Activated B cell treated with CpG ODN at 0.5 μM for 24 hours (primary cell): ENCODE measurements at regions of chr20 and their contacts with region 1.

Region 1: GRCh38 chr20:47468290-47469050 is 33.2 kb upstream of the NCOA3 start:
- DNase-seq: peak; percentile 35
- ATAC-seq: peak; percentile 80
- H3K4me3 Mint-ChIP-seq: peak overlapping the region; percentile 50
- H3K27ac Mint-ChIP-seq: peak overlapping the region; percentile 94
- H3K4me1 Mint-ChIP-seq: peaks cover 64% of the 10 kb centered on the region
- H3K27me3 Mint-ChIP-seq: no peaks in the 10 kb centered on the region
- CTCF ChIP-seq: no peak

Region 2: DNA sequence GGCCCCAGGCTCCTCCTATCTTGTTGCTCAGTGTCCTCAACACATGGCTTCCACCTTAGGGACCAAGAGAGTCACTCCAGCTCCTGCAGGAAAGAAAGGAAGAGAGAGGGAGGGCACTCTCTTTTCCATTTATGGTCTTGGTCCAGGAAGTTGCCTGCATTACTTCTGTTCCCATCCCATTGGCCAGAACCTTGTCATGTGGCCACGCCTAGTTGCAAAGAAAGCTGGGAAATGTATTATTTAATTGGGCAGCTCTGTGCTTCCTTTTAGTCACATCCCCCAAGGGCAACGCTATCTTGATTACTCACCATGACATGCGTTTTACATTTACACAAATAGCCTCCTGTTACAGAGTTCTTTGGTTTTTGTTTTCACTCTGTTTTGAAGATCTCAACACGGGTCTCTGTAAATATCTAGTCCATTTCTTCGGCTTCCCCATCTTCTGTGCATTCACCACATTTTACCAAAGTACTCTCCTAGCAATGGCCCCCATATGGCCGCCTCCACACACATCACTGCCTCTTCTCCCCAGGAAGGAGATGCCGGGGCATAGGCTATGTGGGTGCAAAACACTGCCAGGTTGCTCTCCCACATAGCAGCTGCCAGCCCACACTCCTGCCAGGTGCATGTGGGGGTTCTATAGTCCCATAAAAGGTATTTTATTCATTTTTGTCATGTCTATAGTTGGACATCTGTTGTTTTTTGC is 76.3 kb before region 1 on chr20:
- CTCF ChIA-PET with region 1: interaction called, 4 read pairs
- POLR2A ChIA-PET with region 1: interaction called, 7 read pairs
- intact Hi-C with region 1: loop called (anchors 1 kb)
- DNase-seq: no peak
- ATAC-seq: peak; percentile 74
- H3K4me3 Mint-ChIP-seq: peak overlapping the region; percentile 55
- H3K27ac Mint-ChIP-seq: peak overlapping the region; percentile 95
- H3K4me1 Mint-ChIP-seq: peaks cover 47% of the 10 kb centered on the region
- H3K27me3 Mint-ChIP-seq: no peaks in the 10 kb centered on the region
- CTCF ChIP-seq: no peak

Region 3: DNA sequence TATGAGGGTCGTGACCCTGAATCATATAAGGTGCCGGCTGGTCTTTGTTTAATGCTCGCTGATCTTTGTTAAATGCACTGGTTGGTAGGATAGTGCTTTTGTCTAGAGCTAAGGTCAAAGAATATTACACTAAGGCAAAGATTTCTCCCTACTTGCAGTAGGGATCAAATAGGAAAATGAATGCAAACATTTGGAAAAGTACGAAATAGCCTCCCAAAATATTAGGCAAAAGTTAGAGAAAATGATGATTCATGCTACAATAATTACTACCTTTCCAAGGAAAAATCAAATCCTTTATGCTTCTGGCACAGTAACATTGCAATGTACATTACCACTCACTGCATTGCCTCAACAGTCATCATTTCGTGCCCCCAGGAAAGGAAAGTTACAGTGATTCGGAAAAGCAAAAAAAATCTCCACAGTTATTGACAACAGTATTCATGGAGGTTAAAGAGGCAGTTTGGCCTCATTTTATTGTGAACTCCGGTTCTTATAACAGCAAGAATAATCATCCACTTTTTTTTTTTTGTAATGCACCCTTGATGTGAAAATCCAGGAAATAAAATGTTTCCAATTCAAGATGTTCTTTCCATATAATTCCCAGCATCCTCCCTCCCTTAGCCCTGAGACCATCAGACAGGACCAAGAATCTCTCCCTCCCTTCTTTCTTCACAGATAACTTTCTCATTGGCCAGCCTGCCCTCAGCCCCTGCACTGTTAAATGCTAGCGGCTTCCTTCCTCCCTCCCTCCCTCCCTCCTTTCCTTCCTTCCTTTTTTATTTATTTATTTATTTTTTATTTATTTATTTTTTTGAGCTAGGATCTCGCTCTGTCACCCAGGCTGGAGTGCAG is 50.2 kb before region 1 on chr20:
- CTCF ChIA-PET with region 1: interaction called, 6 read pairs
- POLR2A ChIA-PET with region 1: interaction called, 142 read pairs
- intact Hi-C with region 1: loop called (anchors 1 kb)
- DNase-seq: no peak
- ATAC-seq: no peak
- H3K4me3 Mint-ChIP-seq: no peak overlapping the region
- H3K27ac Mint-ChIP-seq: peak overlapping the region; percentile 100
- H3K4me1 Mint-ChIP-seq: peaks cover 73% of the 10 kb centered on the region
- H3K27me3 Mint-ChIP-seq: no peaks in the 10 kb centered on the region
- CTCF ChIP-seq: no peak

Region 4: GRCh38 chr20:47453142-47453782 is 15.2 kb before region 1 on chr20:
- CTCF ChIA-PET with region 1: no interaction called
- POLR2A ChIA-PET with region 1: interaction called, 21 read pairs
- intact Hi-C with region 1: loop called (anchors 2 kb)
- DNase-seq: no peak
- ATAC-seq: peak; percentile 78
- H3K4me3 Mint-ChIP-seq: peak overlapping the region; percentile 49
- H3K27ac Mint-ChIP-seq: peak overlapping the region; percentile 80
- H3K4me1 Mint-ChIP-seq: peaks cover 55% of the 10 kb centered on the region
- H3K27me3 Mint-ChIP-seq: no peaks in the 10 kb centered on the region
- CTCF ChIP-seq: no peak

Region 5: GRCh38 chr20:47487175-47487917 is 18.9 kb after region 1 on chr20:
- CTCF ChIA-PET with region 1: interaction called, 6 read pairs
- POLR2A ChIA-PET with region 1: interaction called, 99 read pairs
- intact Hi-C with region 1: loop called (anchors 1 kb)
- DNase-seq: peak; percentile 42
- ATAC-seq: peak; percentile 77
- H3K4me3 Mint-ChIP-seq: peak overlapping the region; percentile 72
- H3K27ac Mint-ChIP-seq: peak overlapping the region; percentile 97
- H3K4me1 Mint-ChIP-seq: peaks cover 79% of the 10 kb centered on the region
- H3K27me3 Mint-ChIP-seq: no peaks in the 10 kb centered on the region
- CTCF ChIP-seq: no peak

Region 6: DNA sequence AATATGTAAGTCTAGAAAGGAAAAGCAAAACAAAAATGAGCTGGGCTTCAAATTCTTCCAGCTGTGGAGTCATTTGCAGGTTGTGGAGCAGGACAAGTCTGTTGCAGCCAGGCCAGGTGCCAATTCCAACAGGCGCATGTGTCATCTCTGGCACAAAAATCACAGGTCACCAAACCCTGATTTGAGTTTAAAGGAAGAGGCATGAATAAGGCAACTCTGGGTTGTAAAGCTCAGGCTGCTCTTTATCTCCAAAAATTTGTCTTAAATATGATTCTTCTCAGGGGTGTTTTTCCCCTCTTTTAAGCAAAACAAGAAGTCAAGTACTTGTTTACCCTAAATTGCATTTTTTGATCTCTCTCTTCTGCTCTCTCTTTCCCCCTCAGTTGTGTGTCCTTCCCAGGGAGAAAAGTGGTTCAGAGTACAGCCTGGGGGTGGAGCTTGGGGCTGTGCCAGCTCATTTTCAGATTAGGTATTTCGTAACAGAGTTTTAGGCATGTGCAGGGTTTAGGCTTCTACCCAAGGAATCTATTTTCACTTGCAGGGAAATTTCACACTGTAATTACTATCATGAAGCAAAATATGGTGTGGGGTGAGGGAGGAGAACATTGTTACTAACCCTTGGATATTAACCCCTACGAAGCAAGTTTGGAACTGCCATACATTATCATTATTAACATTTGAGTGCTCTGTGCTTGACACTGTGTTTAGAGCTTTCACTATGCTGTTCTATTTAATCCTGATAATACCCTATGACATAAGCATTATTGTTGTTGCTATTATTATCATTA is 24.9 kb after region 1 on chr20:
- CTCF ChIA-PET with region 1: interaction called, 6 read pairs
- POLR2A ChIA-PET with region 1: interaction called, 99 read pairs
- intact Hi-C with region 1: no loop called
- DNase-seq: no peak
- ATAC-seq: peak; percentile 60
- H3K4me3 Mint-ChIP-seq: peak overlapping the region; percentile 39
- H3K27ac Mint-ChIP-seq: peak overlapping the region; percentile 57
- H3K4me1 Mint-ChIP-seq: peaks cover 72% of the 10 kb centered on the region
- H3K27me3 Mint-ChIP-seq: no peaks in the 10 kb centered on the region
- CTCF ChIP-seq: no peak

Region 7: DNA sequence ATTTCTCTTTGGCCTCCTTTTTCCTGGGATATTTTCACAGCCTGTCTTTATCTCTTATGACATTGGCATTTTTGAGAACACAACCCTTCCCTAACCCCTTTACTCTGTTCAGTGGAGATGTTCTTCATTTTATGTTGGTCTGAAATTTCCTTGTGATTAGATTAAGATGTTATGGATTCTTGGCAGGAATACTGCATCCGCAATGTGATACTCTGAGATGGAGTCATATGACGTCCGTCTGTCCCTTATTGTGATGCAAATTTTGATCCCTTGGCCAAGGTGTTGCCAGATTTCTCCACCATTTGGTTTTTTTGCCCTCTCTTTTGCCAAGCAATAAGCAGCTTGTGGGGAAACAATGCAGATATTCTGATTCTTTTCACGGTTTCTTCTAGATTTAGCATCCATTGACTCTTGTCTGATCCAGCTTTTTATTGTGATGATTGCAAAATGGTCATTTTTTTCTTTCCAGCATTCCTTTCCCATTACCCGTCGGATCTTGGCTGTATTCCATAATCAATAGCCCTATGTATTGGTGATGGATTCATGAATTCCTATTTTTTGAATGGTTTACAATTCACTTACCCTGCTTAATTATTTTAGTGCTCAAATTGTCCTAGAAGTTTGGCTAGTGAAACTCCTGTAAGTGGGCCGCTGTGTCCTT is 118.3 kb after region 1 on chr20:
- CTCF ChIA-PET with region 1: no interaction called
- POLR2A ChIA-PET with region 1: no interaction called
- intact Hi-C with region 1: no loop called
- DNase-seq: no peak
- ATAC-seq: no peak
- H3K4me3 Mint-ChIP-seq: no peak overlapping the region
- H3K27ac Mint-ChIP-seq: peak overlapping the region; percentile 38
- H3K4me1 Mint-ChIP-seq: peaks cover 53% of the 10 kb centered on the region
- H3K27me3 Mint-ChIP-seq: no peaks in the 10 kb centered on the region
- CTCF ChIP-seq: no peak

Region 8: GRCh38 chr20:47631078-47631477 is 162.6 kb after region 1 on chr20:
- CTCF ChIA-PET with region 1: no interaction called
- POLR2A ChIA-PET with region 1: no interaction called
- intact Hi-C with region 1: no loop called
- DNase-seq: no peak
- ATAC-seq: no peak
- H3K4me3 Mint-ChIP-seq: no peak overlapping the region
- H3K27ac Mint-ChIP-seq: no peak overlapping the region
- H3K4me1 Mint-ChIP-seq: no peaks in the 10 kb centered on the region
- H3K27me3 Mint-ChIP-seq: no peaks in the 10 kb centered on the region
- CTCF ChIP-seq: no peak